Dendritic cell treated with granulocyte-macrophage colony-stimulating factor and Interleukin-4, amounts not matched to agents 40 ng/mL and 50 ng/mL, for 4 days (primary cell): ENCODE measurements at regions of chr2 and their contacts with region 1.

Region 1: GRCh38 chr2:208466151-208466919 is 59.7 kb downstream of the PTH2R start:
- H3K4me3 Mint-ChIP-seq: no peak overlapping the region
- H3K27ac Mint-ChIP-seq: no peak overlapping the region
- H3K4me1 Mint-ChIP-seq: peaks cover 5% of the 10 kb centered on the region
- H3K27me3 Mint-ChIP-seq: peaks cover 8% of the 10 kb centered on the region

Region 2: GRCh38 chr2:208713066-208713745 is 246.9 kb after region 1 on chr2:
- intact Hi-C with region 1: loop called (anchors 10 kb)
- H3K4me3 Mint-ChIP-seq: no peak overlapping the region
- H3K27ac Mint-ChIP-seq: peak overlapping the region; percentile 69
- H3K4me1 Mint-ChIP-seq: peaks cover 17% of the 10 kb centered on the region
- H3K27me3 Mint-ChIP-seq: no peaks in the 10 kb centered on the region

Region 3: DNA sequence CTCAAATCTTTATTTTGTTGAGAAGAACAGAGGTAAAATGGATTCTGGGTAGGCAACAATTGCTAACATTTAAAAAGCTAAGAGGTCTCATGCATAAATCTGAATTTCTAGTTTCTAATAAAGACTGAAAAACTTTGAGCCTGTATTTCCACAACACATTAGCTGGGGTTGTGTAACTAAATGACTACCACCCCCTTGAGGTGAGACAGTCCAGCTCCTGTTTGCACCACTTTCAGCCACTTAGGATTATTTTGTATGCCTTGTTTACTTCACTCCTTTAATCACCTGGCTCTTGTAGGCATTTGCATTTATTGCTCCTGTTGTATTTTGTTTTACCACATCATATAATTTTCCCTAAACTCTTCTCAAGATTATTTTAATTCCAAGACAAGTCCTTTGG is 316.9 kb after region 1 on chr2:
- intact Hi-C with region 1: loop called (anchors 2 kb)
- H3K4me3 Mint-ChIP-seq: no peak overlapping the region
- H3K27ac Mint-ChIP-seq: no peak overlapping the region
- H3K4me1 Mint-ChIP-seq: no peaks in the 10 kb centered on the region
- H3K27me3 Mint-ChIP-seq: no peaks in the 10 kb centered on the region

Region 4: GRCh38 chr2:209322041-209322440 is 855.7 kb after region 1 on chr2:
- intact Hi-C with region 1: loop called (anchors 10 kb)
- H3K4me3 Mint-ChIP-seq: no peak overlapping the region
- H3K27ac Mint-ChIP-seq: no peak overlapping the region
- H3K4me1 Mint-ChIP-seq: no peaks in the 10 kb centered on the region
- H3K27me3 Mint-ChIP-seq: peaks cover 4% of the 10 kb centered on the region